ENCODE measurements at regions of chr16 and their contacts with region 1.

Region 1: DNA sequence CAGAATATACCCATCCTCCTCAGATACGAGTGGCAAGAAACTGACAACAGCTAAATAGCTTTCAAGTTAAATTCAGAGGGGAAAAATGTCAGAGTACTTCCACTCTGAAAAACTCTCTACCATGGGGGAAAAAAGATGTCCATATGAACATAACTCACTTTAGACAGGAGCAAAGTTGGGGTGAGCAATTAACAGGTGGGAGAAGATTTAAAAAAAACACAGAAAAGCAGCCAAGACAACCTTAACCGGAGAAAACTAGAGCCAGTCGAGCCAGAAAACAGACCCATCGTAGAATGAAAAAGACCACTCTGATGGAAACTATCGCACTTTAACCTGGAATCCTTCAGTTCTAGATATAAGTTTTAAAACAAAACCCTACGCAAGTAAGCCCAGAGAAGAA is 833 bp downstream of the TERF2 start:
- DNase-seq: no peak
- H3K4me3 ChIP-seq: peak overlapping the region; percentile 79 to 95
- H3K27ac ChIP-seq: peak overlapping the region; percentile 94 to 96
- H3K4me1 ChIP-seq: peaks cover 0 to 13% of the 10 kb centered on the region in 2 donors
- H3K27me3 ChIP-seq: no peaks in the 10 kb centered on the region
- CTCF ChIP-seq: no peak

Region 2: GRCh38 chr16:69330286-69331109 is 54.5 kb before region 1 on chr16 and contains the start of gene PDF:
- intact Hi-C with region 1: loop called (anchors 2 kb)
- DNase-seq: peak; percentile 72 to 96
- H3K4me3 ChIP-seq: peak within 1 kb of the TSS; percentile 73 to 80
- H3K27ac ChIP-seq: peak within 1 kb of the TSS; percentile 89 to 94
- H3K4me1 ChIP-seq: peaks cover 4 to 12% of the 10 kb centered on the region in 2 donors
- H3K27me3 ChIP-seq: no peaks in the 10 kb centered on the region
- CTCF ChIP-seq: no peak
- total RNA-seq, gene PDF: 49.9 TPM